WTC11 (cell line): ENCODE measurements at regions of chr5 and their contacts with region 1.

Region 1: GRCh38 chr5:160269017-160269416 is 39.7 kb downstream of the FABP6 start:
- DNase-seq: no peak
- ATAC-seq: no peak
- H3K4me3 Mint-ChIP-seq: no peak overlapping the region
- H3K27ac Mint-ChIP-seq: 0 out of 2 replicates have a peak overlapping the region, but pooled peaks have one; percentile 38
- H3K4me1 Mint-ChIP-seq: peaks cover 61% of the 10 kb centered on the region
- H3K27me3 Mint-ChIP-seq: no peaks in the 10 kb centered on the region; the same call in 1 of the 2 replicates
- CTCF ChIP-seq: no peak

Region 2: DNA sequence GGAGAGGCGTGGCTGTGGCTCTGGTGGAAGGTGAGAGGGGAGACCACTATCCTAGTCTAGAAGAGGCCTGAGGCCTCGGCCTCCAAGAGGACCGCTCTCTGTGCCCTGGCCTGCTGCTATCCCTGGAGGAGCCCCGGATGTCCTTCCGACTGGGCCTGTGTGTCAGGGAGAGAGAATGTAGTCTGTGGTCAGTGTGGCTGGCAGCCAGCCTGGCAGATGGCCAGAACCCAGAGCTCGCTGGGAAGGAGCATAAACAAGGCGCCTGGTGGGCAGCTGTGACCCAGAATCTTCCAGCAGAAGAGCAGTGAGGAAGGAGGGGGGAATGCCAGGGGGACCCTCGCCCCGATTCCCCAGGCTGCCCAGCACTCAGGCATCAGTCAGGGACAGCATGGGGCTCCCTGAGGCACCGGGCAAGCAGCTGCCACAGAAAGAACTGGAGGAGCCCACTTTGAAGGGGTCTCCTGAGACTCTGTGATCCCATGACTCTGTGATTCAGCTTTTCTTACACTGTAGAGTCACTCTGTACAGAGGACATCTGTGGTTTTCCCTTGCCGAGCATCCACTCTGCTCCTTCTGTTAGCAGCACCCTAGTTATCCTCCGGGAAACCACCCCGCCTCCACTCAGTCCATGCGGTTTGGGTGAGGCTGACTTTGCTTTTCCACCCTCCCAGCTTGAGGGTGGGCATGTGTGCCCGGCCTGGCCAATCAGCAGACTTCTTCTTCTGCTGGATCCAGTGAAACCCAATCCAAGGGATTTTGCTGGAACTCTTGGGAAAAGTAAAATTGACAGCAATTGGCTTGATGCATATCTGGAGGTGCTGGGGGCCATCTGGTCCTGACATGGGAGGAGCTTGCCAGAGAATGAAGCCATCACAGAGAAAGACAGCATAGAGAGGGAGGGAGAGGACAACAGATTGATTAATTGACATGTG is 103.6 kb before region 1 on chr5:
- CTCF ChIA-PET with region 1: no interaction called
- POLR2A ChIA-PET with region 1: no interaction called
- DNase-seq: peak; percentile 64
- ATAC-seq: peak; percentile 82
- H3K4me3 Mint-ChIP-seq: peak overlapping the region; percentile 38
- H3K27ac Mint-ChIP-seq: peak overlapping the region; percentile 96
- H3K4me1 Mint-ChIP-seq: peaks cover 69% of the 10 kb centered on the region
- H3K27me3 Mint-ChIP-seq: no peaks in the 10 kb centered on the region
- CTCF ChIP-seq: no peak

Region 3: GRCh38 chr5:160199410-160199911 is 69.6 kb before region 1 on chr5:
- CTCF ChIA-PET with region 1: interaction called, 15 read pairs
- POLR2A ChIA-PET with region 1: interaction called, 3 read pairs
- DNase-seq: peak; percentile 72
- ATAC-seq: peak; percentile 79
- H3K4me3 Mint-ChIP-seq: peak overlapping the region; percentile 69
- H3K27ac Mint-ChIP-seq: no peak overlapping the region
- H3K4me1 Mint-ChIP-seq: peaks cover 41% of the 10 kb centered on the region
- H3K27me3 Mint-ChIP-seq: peaks cover 4% of the 10 kb centered on the region; the same call in 1 of the 2 replicates
- CTCF ChIP-seq: peak; percentile 92

Region 4: GRCh38 chr5:160245506-160246086 is 23.4 kb before region 1 on chr5:
- CTCF ChIA-PET with region 1: interaction called, 16 read pairs
- POLR2A ChIA-PET with region 1: no interaction called
- DNase-seq: no peak
- ATAC-seq: 0 out of 2 replicates have a peak, but pooled peaks have one; percentile 8
- H3K4me3 Mint-ChIP-seq: no peak overlapping the region
- H3K27ac Mint-ChIP-seq: no peak overlapping the region
- H3K4me1 Mint-ChIP-seq: peaks cover 11% of the 10 kb centered on the region
- H3K27me3 Mint-ChIP-seq: no peaks in the 10 kb centered on the region
- CTCF ChIP-seq: no peak

Region 5: DNA sequence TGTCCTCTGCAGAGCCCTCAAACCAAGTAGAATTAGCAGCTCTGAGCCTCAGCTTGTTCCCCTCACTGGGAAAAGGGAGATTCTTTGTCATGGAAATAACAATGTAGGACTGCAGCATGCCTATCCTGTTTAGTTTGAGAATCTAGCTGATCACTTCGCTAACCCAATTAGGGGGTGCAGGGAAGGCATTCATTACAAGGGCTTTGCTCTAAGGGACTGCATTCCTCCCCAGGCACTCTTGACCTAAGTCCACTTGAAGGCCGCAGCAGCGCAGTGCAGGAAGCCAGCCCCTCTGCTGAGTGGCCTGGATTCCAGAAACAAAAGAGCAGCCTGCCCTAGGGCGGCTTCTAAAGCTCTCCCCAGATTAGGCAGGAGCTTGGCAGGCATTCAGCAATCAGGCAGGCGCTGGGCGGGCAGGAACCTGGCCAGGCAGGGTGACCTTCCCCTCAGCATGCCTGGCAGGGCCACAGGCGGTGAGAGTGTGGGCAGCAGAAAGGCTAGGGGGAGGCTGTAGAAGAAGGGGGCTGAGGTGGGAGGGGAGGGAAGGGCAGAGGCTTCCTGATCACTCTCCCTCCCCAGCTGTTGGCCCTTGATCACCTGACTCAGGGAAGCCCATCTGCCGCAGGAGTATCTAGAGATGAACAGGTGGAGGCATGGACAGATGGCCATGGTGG is 18.5 kb after region 1 on chr5:
- CTCF ChIA-PET with region 1: interaction called, 35 read pairs
- POLR2A ChIA-PET with region 1: interaction called, 5 read pairs
- DNase-seq: peak; percentile 86
- ATAC-seq: peak; percentile 92
- H3K4me3 Mint-ChIP-seq: peak overlapping the region; percentile 60
- H3K27ac Mint-ChIP-seq: peak overlapping the region; percentile 99
- H3K4me1 Mint-ChIP-seq: peaks cover 59% of the 10 kb centered on the region
- H3K27me3 Mint-ChIP-seq: no peaks in the 10 kb centered on the region
- CTCF ChIP-seq: no peak

Region 6: DNA sequence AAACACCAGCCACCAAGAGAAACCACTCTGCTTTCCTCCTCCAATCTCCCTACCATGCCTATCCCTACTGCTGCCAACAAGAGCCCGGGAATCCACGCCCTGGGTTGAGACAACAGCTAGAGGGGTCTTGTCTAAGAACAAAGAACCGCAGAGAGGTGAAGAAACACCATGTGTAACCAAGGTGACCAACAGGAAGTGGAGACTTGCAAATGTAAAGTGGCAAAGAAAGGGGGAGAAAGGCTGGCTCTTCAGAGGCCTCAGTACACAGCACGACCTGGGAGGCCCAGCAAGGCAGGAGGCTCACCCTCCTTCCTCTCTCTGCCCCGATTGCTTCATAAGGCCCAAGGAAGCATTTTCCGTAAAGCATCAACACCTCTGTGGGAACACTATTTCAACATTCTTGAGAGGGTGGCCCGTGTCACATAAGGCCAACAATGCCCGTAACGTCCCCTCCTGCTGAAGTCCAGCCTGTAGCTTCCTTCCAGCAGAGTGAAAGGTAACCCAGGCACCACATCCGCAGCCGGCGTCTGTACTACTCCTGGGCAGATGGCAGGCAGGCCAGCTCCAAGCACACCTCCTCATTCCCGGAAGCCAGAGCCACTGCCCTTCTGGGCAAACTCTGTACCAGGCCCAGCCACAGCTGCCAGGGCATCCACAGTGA is 25.0 kb after region 1 on chr5:
- CTCF ChIA-PET with region 1: interaction called, 10 read pairs
- POLR2A ChIA-PET with region 1: no interaction called
- DNase-seq: no peak
- ATAC-seq: peak; percentile 78
- H3K4me3 Mint-ChIP-seq: no peak overlapping the region
- H3K27ac Mint-ChIP-seq: peak overlapping the region; percentile 94
- H3K4me1 Mint-ChIP-seq: peaks cover 62% of the 10 kb centered on the region
- H3K27me3 Mint-ChIP-seq: no peaks in the 10 kb centered on the region
- CTCF ChIP-seq: no peak

Region 7: DNA sequence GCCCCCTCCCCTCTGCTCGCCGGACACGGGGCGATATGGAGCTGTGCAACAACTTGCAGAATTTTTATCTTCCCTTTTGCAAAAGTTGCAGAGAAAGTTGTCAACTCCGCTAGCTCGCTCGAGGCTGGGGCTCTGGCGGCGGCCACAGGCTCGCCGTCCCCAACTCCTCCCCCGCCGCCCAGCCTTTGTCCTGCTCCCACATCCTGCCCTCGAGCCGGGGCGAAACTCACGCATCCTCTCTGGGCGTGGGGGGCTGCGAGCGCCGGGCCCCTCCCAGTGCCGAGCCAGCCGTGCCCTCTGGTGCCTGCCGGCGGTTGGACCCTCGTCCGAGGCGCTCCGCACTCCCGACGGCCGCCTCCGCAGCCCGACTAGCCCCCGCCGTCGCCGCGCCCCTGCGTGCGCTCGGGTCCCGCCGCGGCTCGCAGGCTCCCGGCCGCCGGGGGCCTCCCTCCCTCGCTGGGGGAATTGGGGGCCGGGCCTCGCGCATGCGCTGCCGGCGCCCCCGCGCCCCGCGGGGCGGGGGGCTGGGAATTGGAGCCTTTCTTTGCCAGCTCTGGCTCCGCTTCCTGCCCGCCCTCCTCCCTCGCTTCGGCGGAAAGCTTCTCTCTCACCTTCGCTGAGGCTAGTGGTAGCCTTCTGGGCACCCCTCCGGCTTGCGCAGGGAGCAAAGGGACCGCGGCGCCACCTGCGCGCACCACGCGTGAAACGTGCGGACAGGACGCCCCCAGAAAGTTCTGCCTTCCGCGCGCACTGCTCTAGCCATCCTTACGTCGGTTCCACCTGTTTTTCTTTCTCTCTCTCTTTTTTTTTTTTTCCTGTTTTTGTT is 43.3 kb after region 1 on chr5 and contains the start of gene CCNJL:
- CTCF ChIA-PET with region 1: interaction called, 18 read pairs
- POLR2A ChIA-PET with region 1: interaction called, 3 read pairs
- DNase-seq: peak; percentile 88
- ATAC-seq: peak; percentile 82
- H3K4me3 Mint-ChIP-seq: peak within 1 kb of the TSS; percentile 90
- H3K27ac Mint-ChIP-seq: peak within 1 kb of the TSS; percentile 85
- H3K4me1 Mint-ChIP-seq: peaks cover 47% of the 10 kb centered on the region
- H3K27me3 Mint-ChIP-seq: no peaks in the 10 kb centered on the region; the same call in 1 of the 2 replicates
- CTCF ChIP-seq: no peak
- total RNA-seq, gene CCNJL: 27.9 to 31.3 TPM (median 28.6 TPM) in 3 replicates